K562 (cell line): ENCODE measurements at regions of chr3 and their contacts with region 1.

Region 1: DNA sequence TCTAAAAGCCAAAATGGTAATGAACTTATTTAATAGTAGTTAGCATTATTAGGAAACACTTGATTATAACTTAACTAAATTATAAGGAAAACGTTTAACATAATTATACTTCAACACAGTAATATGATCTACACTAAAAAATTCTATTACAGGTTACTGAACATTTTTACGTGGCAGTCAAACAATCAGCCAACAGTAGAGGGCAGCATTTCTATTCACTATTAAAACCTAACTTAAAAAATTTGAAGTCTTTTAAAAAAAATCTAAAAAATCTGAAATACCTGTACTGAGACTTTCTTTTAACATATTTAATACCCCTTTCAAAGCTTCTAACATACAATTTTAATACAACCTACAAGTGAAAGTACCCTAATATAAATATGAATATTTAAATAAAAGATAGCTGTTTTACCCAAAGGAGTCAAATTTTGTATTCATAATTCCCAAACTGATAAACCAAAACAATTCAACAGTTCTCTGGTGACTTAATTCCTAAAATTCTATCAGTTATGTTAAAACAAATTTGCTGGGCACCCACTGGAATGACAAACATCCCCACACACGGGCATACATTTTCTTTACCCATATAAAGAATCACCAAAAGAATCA is 41.5 kb downstream of the DLG1 start:
- DNase-seq: peak; percentile 16 to 53 (median 24)
- ATAC-seq: 0 out of 3 replicates have a peak, but pooled peaks have one; percentile 43
- H3K4me3 ChIP-seq: no peak overlapping the region
- H3K27ac ChIP-seq: no peak overlapping the region
- H3K4me1 ChIP-seq: no peaks in the 10 kb centered on the region
- H3K27me3 ChIP-seq: no peaks in the 10 kb centered on the region
- CTCF ChIP-seq: peak in 2 of 3 experiments; percentile 34 to 77; a peak in 3 of 6 replicates
- EP300 ChIP-seq: no peak
- POLR2A ChIP-seq: no peak
- RAD21 ChIP-seq: peak; percentile 68 to 69

Region 2: GRCh38 chr3:197268294-197268693 is 11.4 kb after region 1 on chr3:
- CTCF ChIA-PET with region 1: no interaction called
- POLR2A ChIA-PET with region 1: interaction called, 19 read pairs
- in situ Hi-C with region 1: no loop called
- intact Hi-C with region 1: no loop called
- DNase-seq: peak in 1 of 4 experiments; percentile 34
- ATAC-seq: peak; percentile 65
- H3K4me3 ChIP-seq: no peak overlapping the region
- H3K27ac ChIP-seq: no peak overlapping the region
- H3K4me1 ChIP-seq: peaks cover 8 to 9% of the 10 kb centered on the region in 2 experiments; a peak in 4 of 5 replicates
- H3K27me3 ChIP-seq: no peaks in the 10 kb centered on the region
- CTCF ChIP-seq: no peak
- EP300 ChIP-seq: no peak
- POLR2A ChIP-seq: no peak
- RAD21 ChIP-seq: no peak

Region 3: GRCh38 chr3:197372047-197372666 is 115.2 kb after region 1 on chr3:
- CTCF ChIA-PET with region 1: no interaction called
- POLR2A ChIA-PET with region 1: no interaction called
- in situ Hi-C with region 1: no loop called
- intact Hi-C with region 1: loop called (anchors 10 kb)
- DNase-seq: no peak
- ATAC-seq: no peak
- H3K4me3 ChIP-seq: no peak overlapping the region
- H3K27ac ChIP-seq: no peak overlapping the region
- H3K4me1 ChIP-seq: no peaks in the 10 kb centered on the region
- H3K27me3 ChIP-seq: peaks cover 62 to 70% of the 10 kb centered on the region in 2 experiments
- CTCF ChIP-seq: no peak
- EP300 ChIP-seq: no peak
- POLR2A ChIP-seq: no peak
- RAD21 ChIP-seq: no peak

Region 4: GRCh38 chr3:197456261-197457091 is 199.5 kb after region 1 on chr3:
- CTCF ChIA-PET with region 1: interaction called, 12 read pairs
- POLR2A ChIA-PET with region 1: no interaction called
- in situ Hi-C with region 1: no loop called
- intact Hi-C with region 1: loop called (anchors 10 kb)
- DNase-seq: peak; percentile 53 to 74 (median 63)
- ATAC-seq: peak; percentile 81
- H3K4me3 ChIP-seq: peak overlapping the region; percentile 30
- H3K27ac ChIP-seq: peak overlapping the region; percentile 34; the same call in 1 of the 3 replicates
- H3K4me1 ChIP-seq: peaks cover 8 to 16% of the 10 kb centered on the region in 2 experiments
- H3K27me3 ChIP-seq: peaks cover 3 to 27% of the 10 kb centered on the region in 2 experiments; a peak in 4 of 5 replicates
- CTCF ChIP-seq: no peak
- EP300 ChIP-seq: no peak
- POLR2A ChIP-seq: no peak; the same call in 1 of the 2 replicates
- RAD21 ChIP-seq: no peak

Region 5: DNA sequence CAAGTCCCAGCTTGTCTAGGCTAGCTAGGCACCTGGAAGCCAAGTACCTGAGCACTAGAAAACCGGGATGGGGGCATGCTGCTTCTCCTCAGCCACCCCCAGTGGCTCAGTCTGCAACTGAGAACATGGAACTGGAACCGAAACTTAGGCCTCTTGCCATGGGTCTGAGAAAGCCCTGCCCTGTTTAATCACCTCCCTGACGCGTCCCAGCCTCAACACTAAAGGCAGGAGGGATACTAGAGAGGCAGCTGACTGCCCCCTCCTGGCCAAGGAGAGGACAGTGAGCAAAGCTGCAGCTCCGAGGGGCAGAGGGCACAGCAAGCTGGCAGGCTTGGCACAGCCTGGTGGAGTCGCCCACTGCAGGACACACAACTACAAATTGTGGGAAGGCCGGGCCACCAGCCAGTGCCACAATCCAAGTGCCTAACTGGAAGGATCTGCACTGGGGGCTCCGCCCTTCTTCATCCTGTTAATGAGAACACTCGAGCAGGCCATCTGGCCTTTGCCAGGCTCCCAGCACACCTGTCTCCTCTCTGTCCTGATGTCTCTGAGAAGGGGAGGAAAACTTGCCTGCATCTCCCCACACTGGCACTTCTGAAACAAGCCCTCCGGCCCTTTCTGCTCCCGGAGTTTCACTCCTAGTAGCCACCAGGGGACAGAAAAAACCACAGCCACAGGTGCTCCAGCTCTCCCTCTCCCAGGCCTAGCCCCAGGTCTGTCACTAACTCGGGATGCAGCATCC is 245.1 kb after region 1 on chr3:
- CTCF ChIA-PET with region 1: no interaction called
- POLR2A ChIA-PET with region 1: no interaction called
- in situ Hi-C with region 1: loop called (anchors 25 kb)
- intact Hi-C with region 1: no loop called
- DNase-seq: no peak
- ATAC-seq: peak; percentile 62
- H3K4me3 ChIP-seq: no peak overlapping the region
- H3K27ac ChIP-seq: no peak overlapping the region
- H3K4me1 ChIP-seq: peaks cover 6 to 17% of the 10 kb centered on the region in 2 experiments; a peak in 4 of 5 replicates
- H3K27me3 ChIP-seq: peaks cover 0 to 13% of the 10 kb centered on the region in 2 experiments; a peak in 4 of 5 replicates
- CTCF ChIP-seq: peak; percentile 35 to 57 (median 37); a peak in 4 of 6 replicates
- EP300 ChIP-seq: no peak
- POLR2A ChIP-seq: no peak
- RAD21 ChIP-seq: peak; percentile 21 to 60; a peak in 2 of 4 replicates

Region 6: DNA sequence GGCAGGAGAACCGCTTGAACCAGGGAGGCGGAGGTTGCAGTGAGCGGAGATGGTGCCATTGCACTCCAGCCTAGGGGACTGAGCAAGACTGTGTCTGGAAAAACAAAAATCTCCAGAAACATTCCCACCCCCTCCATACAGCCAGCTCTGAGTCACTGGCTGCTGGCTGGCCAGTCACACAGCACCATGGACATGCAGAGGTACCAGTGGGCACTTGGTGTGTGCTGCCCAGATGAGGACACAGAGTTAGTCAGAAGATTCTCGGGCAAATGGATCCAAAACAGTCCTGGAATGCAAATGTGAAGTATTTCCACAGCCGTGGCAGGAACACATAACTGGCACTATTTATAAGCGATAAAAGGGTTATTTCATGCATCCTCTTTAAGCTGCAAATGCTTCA is 254.2 kb after region 1 on chr3:
- CTCF ChIA-PET with region 1: interaction called, 10 read pairs
- POLR2A ChIA-PET with region 1: no interaction called
- in situ Hi-C with region 1: loop called (anchors 25 kb)
- intact Hi-C with region 1: loop called (anchors 2 kb)
- DNase-seq: no peak
- ATAC-seq: no peak
- H3K4me3 ChIP-seq: no peak overlapping the region
- H3K27ac ChIP-seq: no peak overlapping the region
- H3K4me1 ChIP-seq: peaks cover under 1 to 38% of the 10 kb centered on the region in 2 experiments
- H3K27me3 ChIP-seq: peaks cover 14 to 34% of the 10 kb centered on the region in 2 experiments; a peak in 4 of 5 replicates
- CTCF ChIP-seq: no peak
- EP300 ChIP-seq: no peak
- POLR2A ChIP-seq: no peak
- RAD21 ChIP-seq: no peak

Region 7: GRCh38 chr3:197674741-197675562 is 418.0 kb after region 1 on chr3:
- CTCF ChIA-PET with region 1: no interaction called
- POLR2A ChIA-PET with region 1: no interaction called
- in situ Hi-C with region 1: no loop called
- intact Hi-C with region 1: no loop called
- DNase-seq: no peak
- ATAC-seq: no peak
- H3K4me3 ChIP-seq: no peak overlapping the region
- H3K27ac ChIP-seq: no peak overlapping the region
- H3K4me1 ChIP-seq: peaks cover 0 to 5% of the 10 kb centered on the region in 2 experiments; a peak in 1 of 5 replicates
- H3K27me3 ChIP-seq: no peaks in the 10 kb centered on the region
- CTCF ChIP-seq: no peak
- EP300 ChIP-seq: no peak
- POLR2A ChIP-seq: no peak
- RAD21 ChIP-seq: no peak